Sciatic nerve (tissue), 2 donors: ENCODE measurements at regions of chr18 and their contacts with region 1.

Region 1: GRCh38 chr18:923141-923866 is 18.6 kb downstream of the ADCYAP1 start:
- DNase-seq: no peak
- ATAC-seq: no peak

Region 2: DNA sequence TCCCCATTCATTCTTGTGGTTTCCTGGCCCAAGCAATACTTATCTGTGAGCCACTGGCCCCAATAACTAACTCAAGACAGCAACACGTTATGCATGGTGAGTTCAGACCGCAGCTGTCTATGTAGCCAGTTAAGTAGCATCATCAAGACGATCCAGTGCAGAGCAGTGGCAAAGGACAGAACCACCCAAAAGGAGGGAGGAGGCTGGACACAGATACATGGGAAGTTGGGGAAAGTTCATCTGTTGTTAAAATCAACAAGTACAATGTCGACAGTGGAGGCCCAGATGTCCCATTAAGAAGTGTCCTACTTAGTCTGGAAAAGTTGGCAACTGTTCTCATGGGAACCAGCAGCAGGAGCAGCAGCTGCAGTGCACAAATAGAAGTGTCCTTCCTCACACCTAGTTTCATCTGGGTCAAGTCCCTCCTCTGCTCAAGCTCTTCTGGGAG is 548.6 kb before region 1 on chr18:
- intact Hi-C with region 1: no loop called
- DNase-seq: no peak
- ATAC-seq: peak; percentile 62

Region 3: DNA sequence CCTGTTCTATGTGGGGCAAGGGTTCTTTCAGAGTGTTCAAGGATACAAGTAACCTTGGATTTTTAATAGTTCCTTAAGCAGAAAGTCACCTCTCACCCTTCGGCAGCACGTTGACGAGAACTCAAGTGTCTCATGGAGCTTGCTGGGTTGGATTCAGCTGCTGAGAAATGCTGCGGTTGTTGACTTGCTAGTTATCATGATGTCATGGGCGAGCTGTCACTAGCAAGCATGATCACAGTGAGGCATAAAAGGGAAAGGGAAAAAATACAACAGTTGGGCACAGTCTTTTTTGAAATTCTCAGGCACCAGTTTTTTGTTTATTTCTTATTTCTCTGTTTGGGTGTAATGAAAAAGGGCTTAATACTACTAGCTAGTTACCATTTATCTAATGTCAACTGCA is 34.5 kb after region 1 on chr18:
- intact Hi-C with region 1: loop called (anchors 2 kb)
- DNase-seq: no peak
- ATAC-seq: no peak